Heart right ventricle (tissue), 16 donors: ENCODE measurements at regions of chr13 and their contacts with region 1.

Region 1: GRCh38 chr13:39803179-39803578 is 147.7 kb downstream of the COG6 start:
- DNase-seq: no peak
- ATAC-seq: no peak
- H3K4me3 ChIP-seq: no peak overlapping the region
- H3K27ac ChIP-seq: no peak overlapping the region
- H3K4me1 ChIP-seq: no peaks in the 10 kb centered on the region
- H3K27me3 ChIP-seq: no peaks in the 10 kb centered on the region
- CTCF ChIP-seq: no peak

Region 2: GRCh38 chr13:39740783-39741182 is 62.4 kb before region 1 on chr13:
- intact Hi-C with region 1: no loop called
- DNase-seq: no peak
- ATAC-seq: no peak
- H3K4me3 ChIP-seq: no peak overlapping the region
- H3K27ac ChIP-seq: no peak overlapping the region
- H3K4me1 ChIP-seq: no peaks in the 10 kb centered on the region
- H3K27me3 ChIP-seq: no peaks in the 10 kb centered on the region
- CTCF ChIP-seq: no peak

Region 3: DNA sequence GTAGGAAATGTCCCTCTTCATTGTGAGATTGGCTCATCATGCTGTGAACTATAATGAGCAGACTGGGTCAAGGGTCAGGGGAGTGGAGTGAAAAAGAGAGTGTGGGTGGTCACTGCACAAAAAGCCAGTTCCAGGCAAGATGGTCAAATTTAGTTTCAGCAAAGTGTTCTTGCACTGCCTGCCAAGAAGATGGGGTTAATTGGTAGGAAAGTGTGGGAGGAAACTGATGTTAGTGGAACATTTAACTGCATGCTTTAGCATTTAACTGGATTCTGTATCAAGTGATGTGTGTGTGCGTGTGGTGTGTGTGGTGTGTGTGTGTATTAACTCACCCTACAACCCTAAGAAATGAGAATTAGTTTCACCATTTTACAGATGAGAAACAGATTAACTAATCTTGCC is 16.1 kb before region 1 on chr13:
- intact Hi-C with region 1: no loop called
- DNase-seq: peak in 1 of 2 donors; percentile 21
- ATAC-seq: peak in 6 of 8 donors; percentile 38 to 76 (median 58)
- H3K4me3 ChIP-seq: no peak overlapping the region
- H3K27ac ChIP-seq: peak overlapping the region in 3 of 10 donors; percentile 6 to 42 (median 11)
- H3K4me1 ChIP-seq: peaks cover 0 to 32% (median 5%) of the 10 kb centered on the region in 9 donors
- H3K27me3 ChIP-seq: no peaks in the 10 kb centered on the region
- CTCF ChIP-seq: no peak

Region 4: DNA sequence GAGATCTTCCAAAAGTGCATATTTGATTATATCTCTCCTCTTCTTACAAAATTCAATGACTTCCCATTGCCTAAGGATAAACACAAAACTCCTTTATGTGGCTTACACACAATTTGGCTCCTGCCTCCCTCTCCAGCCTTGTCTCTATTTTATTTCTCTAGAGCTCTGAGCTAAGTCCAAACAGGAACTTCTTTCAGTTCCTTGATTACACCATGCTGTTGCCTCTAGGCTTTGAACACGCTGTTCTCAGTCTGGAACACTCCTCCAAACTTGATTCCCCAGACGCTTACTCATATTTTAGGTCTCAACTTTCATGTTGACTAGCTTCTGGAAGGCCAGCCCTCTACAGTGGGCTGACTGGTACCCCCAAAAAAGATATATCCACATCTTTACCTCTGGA is 110.7 kb after region 1 on chr13:
- intact Hi-C with region 1: loop called in 1 of 10 experiments (anchors 10 kb)
- DNase-seq: no peak
- ATAC-seq: peak in 7 of 8 donors; percentile 62 to 96 (median 91)
- H3K4me3 ChIP-seq: no peak overlapping the region
- H3K27ac ChIP-seq: peak overlapping the region in 4 of 10 donors; percentile 1 to 30 (median 6)
- H3K4me1 ChIP-seq: peaks cover 0 to 25% (median 8%) of the 10 kb centered on the region in 9 donors
- H3K27me3 ChIP-seq: no peaks in the 10 kb centered on the region
- CTCF ChIP-seq: no peak